Endothelial cell of umbilical vein (primary cell): ENCODE measurements at regions of chr1 and their contacts with region 1.

Region 1: DNA sequence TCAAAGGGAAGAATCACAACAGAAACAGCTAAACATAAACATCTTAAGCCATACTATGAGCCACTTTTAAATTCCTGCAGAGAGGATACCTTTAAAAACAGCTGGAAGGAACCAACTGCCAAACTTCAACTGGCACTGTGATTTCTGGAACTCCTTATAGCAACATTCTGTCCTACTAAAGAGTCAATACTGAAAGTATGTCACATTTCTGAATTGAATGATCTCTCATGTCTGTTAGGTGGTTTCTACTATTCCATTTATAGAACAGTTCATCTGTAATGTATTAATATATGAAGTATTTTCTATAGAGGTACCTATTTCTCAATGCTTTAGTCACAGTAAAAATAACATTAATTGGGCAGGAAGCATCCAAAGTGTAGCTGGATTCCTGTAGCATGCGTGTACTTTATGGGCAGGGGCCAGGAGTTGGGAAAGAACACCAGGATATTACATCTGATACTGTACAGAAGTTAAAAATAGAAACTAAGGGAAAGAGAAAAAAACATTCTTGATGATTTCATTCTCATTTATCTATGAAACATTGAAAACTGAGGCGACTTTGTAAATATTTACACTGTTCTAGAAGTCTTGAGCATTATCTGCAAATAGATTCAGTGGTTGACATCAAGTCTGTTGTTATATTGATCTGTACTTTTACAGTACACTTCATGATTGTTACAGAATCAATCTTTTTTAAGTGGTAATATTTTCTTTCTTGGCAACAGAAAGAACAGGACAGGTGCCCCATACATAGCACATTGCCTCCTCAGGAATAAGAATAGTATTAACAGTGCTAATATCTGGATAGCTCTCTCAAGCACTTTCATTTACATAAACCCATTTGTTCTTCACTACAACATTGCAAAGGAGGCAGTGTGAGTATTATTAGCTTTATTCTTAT is 6.1 kb upstream of the ZNF281 start:
- DNase-seq: peak; percentile 94
- H3K4me3 ChIP-seq: peak overlapping the region in 1 of 3 experiments; percentile 55
- H3K27ac ChIP-seq: peak overlapping the region; percentile 99
- H3K4me1 ChIP-seq: peaks cover 24% of the 10 kb centered on the region
- H3K27me3 ChIP-seq: no peaks in the 10 kb centered on the region
- CTCF ChIP-seq: no peak
- POLR2A ChIP-seq: no peak

Region 2: DNA sequence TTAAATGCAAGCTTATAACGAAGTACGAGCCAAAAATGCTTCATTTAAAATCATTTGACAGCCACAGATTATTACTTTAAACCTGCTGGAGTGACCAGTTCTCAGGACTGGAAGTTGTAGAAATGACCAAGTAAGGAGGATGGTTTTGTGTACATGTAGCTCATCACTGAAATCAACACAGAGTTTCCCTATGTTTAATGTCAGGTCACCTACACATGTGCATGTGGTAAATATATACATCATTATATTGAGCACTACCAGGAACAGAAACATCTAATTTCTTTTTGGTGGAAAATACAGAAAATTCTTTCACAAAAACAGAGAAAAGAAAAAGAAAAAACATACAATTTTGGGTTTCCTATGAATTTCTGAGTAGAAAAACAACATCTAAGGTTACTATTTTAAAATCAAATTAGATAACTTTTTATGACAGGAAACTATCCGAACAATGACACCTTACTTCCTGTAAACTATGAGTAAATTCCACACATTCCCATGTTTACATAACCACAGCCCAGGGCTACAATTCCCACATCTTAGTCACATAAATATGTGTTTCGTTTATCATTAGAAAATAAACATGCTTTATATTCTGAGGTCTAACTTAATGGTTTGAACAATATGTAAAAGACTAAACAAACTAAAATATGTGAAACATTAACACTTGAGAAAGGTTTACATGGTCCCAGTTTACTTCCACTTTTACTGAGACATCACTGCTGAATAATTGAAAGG is 79.7 kb before region 1 on chr1:
- CTCF ChIA-PET with region 1: no interaction called
- POLR2A ChIA-PET with region 1: no interaction called
- dilution Hi-C with region 1: no loop called
- intact Hi-C with region 1: loop called (anchors 2 kb)
- DNase-seq: peak; percentile 55
- H3K4me3 ChIP-seq: no peak overlapping the region
- H3K27ac ChIP-seq: peak overlapping the region; percentile 49
- H3K4me1 ChIP-seq: peaks cover 13% of the 10 kb centered on the region
- H3K27me3 ChIP-seq: no peaks in the 10 kb centered on the region
- CTCF ChIP-seq: no peak
- POLR2A ChIP-seq: no peak

Region 3: DNA sequence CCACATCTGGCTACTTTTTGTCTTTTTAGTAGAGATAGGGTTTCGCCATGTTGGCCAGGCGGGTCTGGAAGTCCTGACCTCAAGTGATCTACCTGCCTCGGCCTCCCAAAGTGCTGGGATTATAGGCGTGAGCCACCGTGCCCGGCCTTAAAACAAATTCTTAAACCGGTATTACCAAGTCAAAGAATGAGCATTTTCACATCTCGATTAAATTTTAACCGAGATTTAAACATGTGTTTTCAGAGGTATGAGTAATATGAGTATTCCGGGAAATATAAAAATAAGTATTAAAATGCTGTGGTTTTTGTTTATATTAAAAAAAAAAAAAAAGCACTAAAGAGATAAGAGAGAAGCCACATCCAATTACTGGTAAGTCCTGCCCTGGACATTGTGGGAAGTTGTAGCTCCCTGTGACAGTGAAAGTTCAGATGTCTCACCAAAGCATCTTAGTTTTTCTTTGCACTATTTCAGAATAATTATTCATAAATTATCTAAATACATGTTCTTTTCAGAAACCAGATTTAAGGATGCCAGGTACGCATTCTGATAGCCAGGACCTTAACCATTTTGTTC is 31.0 kb before region 1 on chr1:
- CTCF ChIA-PET with region 1: no interaction called
- POLR2A ChIA-PET with region 1: no interaction called
- dilution Hi-C with region 1: no loop called
- intact Hi-C with region 1: no loop called
- DNase-seq: no peak
- H3K4me3 ChIP-seq: no peak overlapping the region
- H3K27ac ChIP-seq: no peak overlapping the region
- H3K4me1 ChIP-seq: no peaks in the 10 kb centered on the region
- H3K27me3 ChIP-seq: no peaks in the 10 kb centered on the region
- CTCF ChIP-seq: no peak
- POLR2A ChIP-seq: no peak

Region 4: DNA sequence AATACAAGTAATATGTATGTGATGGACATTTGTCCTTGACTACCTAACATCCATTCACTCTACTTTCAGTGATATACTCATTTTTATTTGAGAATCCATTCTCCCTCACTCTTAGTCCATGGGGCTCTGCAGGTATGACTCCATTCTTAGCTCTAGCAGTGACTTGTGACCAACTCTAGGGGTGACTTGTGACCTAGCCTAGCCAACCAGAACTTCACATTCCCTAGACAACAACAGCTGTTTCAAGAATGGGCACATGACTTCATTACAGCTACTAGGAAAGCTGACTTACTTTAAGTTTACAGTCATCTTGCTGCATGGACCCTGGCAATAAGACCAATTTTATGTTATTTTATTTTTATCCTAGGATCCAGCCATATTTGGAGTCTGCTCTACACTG is 277.4 kb after region 1 on chr1:
- CTCF ChIA-PET with region 1: no interaction called
- POLR2A ChIA-PET with region 1: no interaction called
- dilution Hi-C with region 1: no loop called
- intact Hi-C with region 1: no loop called
- DNase-seq: no peak
- H3K4me3 ChIP-seq: no peak overlapping the region
- H3K27ac ChIP-seq: no peak overlapping the region
- H3K4me1 ChIP-seq: no peaks in the 10 kb centered on the region
- H3K27me3 ChIP-seq: no peaks in the 10 kb centered on the region
- CTCF ChIP-seq: no peak
- POLR2A ChIP-seq: no peak